Stomach (tissue), 19 donors: ENCODE measurements at regions of chr17 and their contacts with region 1.

Region 1: GRCh38 chr17:43483674-43484372 is at the start of gene DHX8:
- DNase-seq: peak; percentile 99
- H3K4me3 ChIP-seq: peak within 1 kb of the TSS; percentile 63 to 84 (median 80)
- H3K27ac ChIP-seq: peak within 1 kb of the TSS; percentile 80 to 90 (median 86)
- H3K4me1 ChIP-seq: peaks cover 23 to 42% (median 33%) of the 10 kb centered on the region in 4 donors
- H3K27me3 ChIP-seq: no peaks in the 10 kb centered on the region
- CTCF ChIP-seq: peak in 6 of 7 experiments; percentile 59 to 100 (median 100)
- EP300 ChIP-seq: no peak
- POLR2A ChIP-seq: no peak
- total RNA-seq, gene DHX8: 9.8 to 137 (median 28.6) TPM

Region 2: GRCh38 chr17:43393944-43394482 is 89.8 kb before region 1 on chr17:
- intact Hi-C with region 1: loop called (anchors 5 kb)
- DNase-seq: peak; percentile 95
- H3K4me3 ChIP-seq: no peak overlapping the region
- H3K27ac ChIP-seq: peak overlapping the region in 4 of 5 donors; percentile 6 to 74 (median 57)
- H3K4me1 ChIP-seq: peaks cover 15 to 35% (median 27%) of the 10 kb centered on the region in 4 donors
- H3K27me3 ChIP-seq: no peaks in the 10 kb centered on the region
- CTCF ChIP-seq: peak in 6 of 7 experiments; percentile 52 to 98 (median 92)
- EP300 ChIP-seq: no peak
- POLR2A ChIP-seq: no peak

Region 3: GRCh38 chr17:43779145-43780125 is 295.6 kb after region 1 on chr17:
- intact Hi-C with region 1: no loop called
- DNase-seq: no peak
- H3K4me3 ChIP-seq: peak overlapping the region; percentile 68 to 96 (median 82)
- H3K27ac ChIP-seq: peak overlapping the region; percentile 99 to 100 (median 99)
- H3K4me1 ChIP-seq: peaks cover 36 to 52% (median 44%) of the 10 kb centered on the region in 4 donors
- H3K27me3 ChIP-seq: no peaks in the 10 kb centered on the region
- CTCF ChIP-seq: no peak
- EP300 ChIP-seq: no peak
- POLR2A ChIP-seq: no peak